ENCODE measurements at regions of chr1 and their contacts with region 1.

Region 1: DNA sequence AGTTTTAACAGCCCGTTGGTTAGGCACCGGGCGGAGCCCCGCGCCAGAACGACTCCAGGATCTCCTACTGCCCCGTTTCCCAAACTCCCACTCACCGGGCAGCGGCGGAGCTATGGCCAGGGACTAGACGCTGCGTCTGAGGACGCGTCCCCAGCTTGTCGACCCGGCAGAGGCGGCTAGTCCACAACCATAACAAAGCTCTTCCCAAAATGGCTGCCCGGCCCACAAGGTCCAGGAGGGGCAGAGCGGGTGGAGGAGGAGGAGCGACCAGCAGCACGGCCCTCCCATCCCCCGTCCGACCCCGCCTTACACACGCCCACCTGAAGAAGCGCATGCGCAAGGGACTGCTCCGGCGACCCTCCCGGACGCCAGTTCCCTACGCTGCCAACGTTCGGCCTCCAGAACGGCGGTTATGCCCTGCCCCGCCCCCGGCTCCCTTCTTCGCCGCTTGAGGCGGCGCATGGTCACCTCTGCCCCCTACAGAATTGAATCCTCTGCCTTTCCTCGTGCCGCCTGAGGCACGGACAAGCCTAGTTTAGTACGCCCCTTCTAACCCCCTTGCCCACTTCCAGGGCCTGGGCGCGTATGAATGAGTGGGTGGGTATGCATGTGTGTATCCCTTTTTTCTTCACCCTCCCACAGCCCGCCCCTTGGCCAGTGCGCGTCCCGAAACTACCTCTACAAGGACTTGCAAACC is at the start of gene GPBP1L1:
- DNase-seq: peak; percentile 95 to 99 (median 97)
- H3K4me3 ChIP-seq: peak within 1 kb of the TSS; percentile 63 to 100 (median 97)
- H3K27ac ChIP-seq: peak within 1 kb of the TSS; percentile 89 to 99 (median 98)
- H3K27me3 ChIP-seq: no peaks in the 10 kb centered on the region
- CTCF ChIP-seq: peak in 18 of 56 donors; percentile 4 to 39 (median 12)
- total RNA-seq, gene GPBP1L1: 67.0 to 120 (median 87.2) TPM

Region 2: DNA sequence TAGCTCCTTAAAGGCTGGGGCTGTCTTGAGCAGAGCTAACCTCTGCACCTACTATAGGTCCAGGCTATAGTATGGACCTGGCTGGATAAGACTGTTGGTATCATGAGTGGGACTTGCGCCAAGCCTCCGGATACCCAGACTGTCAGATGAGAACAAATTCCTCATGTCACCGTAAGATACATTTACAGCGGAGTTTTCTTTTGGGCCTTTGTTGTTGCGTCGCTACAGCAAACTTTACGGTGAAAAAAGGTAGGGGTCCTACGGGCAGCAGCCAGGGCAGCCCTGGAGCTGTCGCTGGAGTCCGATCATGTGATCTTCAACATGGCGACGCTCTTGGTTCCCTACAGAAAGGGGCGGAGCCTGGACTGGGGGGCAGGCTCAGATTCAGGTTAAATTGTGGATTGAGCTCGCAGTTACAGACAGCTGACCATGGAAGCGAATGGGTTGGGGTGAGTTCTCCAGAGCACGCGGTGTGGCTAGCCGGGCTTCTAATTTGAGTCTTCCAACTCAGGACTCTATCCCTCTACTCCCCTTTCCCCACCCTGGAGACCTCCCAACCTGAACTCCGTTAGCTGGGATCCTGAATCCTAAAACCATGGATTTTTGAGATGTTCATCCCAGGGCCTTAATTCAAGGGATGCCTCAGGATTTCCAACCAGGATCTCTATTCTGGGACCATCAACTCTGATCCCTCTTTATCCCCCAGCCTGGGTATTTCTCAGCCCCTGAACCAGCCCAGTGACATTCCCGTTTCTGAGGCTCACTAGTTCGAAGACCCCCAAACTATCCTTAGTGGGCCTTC is 674.4 kb before region 1 on chr1 and contains the start of gene UROD:
- intact Hi-C with region 1: loop called in 1 of 2 experiments (anchors 5 kb)
- DNase-seq: peak; percentile 84 to 97 (median 94)
- H3K4me3 ChIP-seq: peak within 1 kb of the TSS; percentile 64 to 100 (median 97)
- H3K27ac ChIP-seq: peak within 1 kb of the TSS; percentile 52 to 94 (median 85)
- H3K27me3 ChIP-seq: no peaks in the 10 kb centered on the region
- CTCF ChIP-seq: peak in 39 of 56 donors; percentile 3 to 62 (median 35)
- total RNA-seq, gene UROD: 53.7 to 114 (median 90.3) TPM

Region 3: DNA sequence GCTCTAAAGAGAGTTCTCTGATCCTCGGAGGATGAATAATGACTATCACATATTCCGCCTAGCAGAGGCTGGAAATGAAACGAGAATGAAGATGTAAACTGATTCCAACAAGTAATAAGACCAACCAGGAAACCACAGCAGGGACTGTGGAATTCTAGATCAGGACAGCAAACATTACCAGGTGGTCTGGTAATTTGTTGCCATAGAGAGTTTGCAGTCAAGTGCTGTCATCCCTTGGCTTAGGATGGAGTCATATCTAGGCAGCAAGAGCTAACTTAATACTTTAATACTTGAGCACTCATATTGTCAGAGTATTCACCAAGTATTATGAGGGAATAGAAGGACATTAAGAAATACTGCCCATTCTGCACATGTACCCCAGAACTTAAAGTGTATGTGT is 301.2 kb before region 1 on chr1:
- intact Hi-C with region 1: no loop called
- DNase-seq: no peak
- H3K4me3 ChIP-seq: no peak overlapping the region
- H3K27ac ChIP-seq: no peak overlapping the region
- H3K27me3 ChIP-seq: no peaks in the 10 kb centered on the region
- CTCF ChIP-seq: no peak

Region 4: DNA sequence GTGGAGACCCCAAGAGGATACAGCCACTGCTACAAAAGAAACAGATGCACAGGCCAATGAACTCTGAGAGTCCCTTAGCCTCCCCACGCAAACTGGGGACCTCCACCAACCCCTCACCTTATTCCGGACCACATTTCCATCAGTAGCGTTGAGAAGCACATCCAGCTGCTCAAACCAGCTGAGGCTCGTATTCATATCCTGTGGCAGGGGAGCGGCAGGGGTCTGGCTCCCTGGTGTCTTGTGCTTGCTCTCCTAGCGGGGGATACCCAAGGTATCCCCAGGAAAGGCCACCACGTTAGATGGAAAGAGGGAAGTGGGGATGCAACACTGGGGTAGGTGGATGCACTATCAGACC is 187.1 kb before region 1 on chr1:
- intact Hi-C with region 1: loop called in 1 of 2 experiments (anchors 2 kb)
- DNase-seq: no peak
- H3K4me3 ChIP-seq: peak overlapping the region; percentile 39 to 92 (median 79)
- H3K27ac ChIP-seq: peak overlapping the region in 55 of 59 donors; percentile 6 to 97 (median 89)
- H3K27me3 ChIP-seq: no peaks in the 10 kb centered on the region
- CTCF ChIP-seq: no peak

Region 5: DNA sequence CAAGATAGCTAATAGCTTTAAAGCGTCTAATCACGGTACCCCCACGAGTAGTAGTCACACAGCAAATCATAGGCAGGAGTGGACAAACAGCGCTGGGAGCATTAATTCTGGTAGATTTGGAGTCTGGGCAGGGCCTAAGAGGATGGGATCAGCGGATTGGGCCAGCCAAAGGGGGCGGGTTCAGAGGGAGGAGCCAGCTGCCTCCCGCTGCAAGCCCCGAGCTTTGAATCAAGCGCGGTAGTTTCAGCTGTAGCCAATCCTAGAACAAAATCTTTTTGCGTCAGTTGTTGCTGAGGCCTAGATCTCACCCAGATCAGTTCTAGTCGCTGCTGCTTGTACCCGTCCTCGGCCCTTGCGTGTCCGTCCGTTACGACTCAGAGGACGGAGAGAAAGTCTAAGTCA is 103.2 kb before region 1 on chr1:
- intact Hi-C with region 1: loop called (anchors 1 kb)
- DNase-seq: peak; percentile 84 to 97 (median 96)
- H3K4me3 ChIP-seq: peak overlapping the region; percentile 63 to 100 (median 93)
- H3K27ac ChIP-seq: peak overlapping the region in 58 of 59 donors; percentile 23 to 96 (median 84)
- H3K27me3 ChIP-seq: no peaks in the 10 kb centered on the region
- CTCF ChIP-seq: peak in 6 of 56 donors; percentile 14 to 36 (median 22)

Region 6: GRCh38 chr1:45750298-45751038 is 64.0 kb after region 1 on chr1 and contains the start of gene IPP:
- intact Hi-C with region 1: loop called (anchors 1 to 2 kb)
- DNase-seq: peak; percentile 87 to 95 (median 92)
- H3K4me3 ChIP-seq: peak within 1 kb of the TSS; percentile 60 to 94 (median 78)
- H3K27ac ChIP-seq: peak within 1 kb of the TSS; percentile 84 to 99 (median 98)
- H3K27me3 ChIP-seq: no peaks in the 10 kb centered on the region
- CTCF ChIP-seq: peak in 54 of 56 donors; percentile 18 to 77 (median 52)
- total RNA-seq, gene IPP: 9.4 to 25.7 (median 16.6) TPM

Region 7: GRCh38 chr1:45876000-45876617 is 189.6 kb after region 1 on chr1:
- intact Hi-C with region 1: loop called in 1 of 2 experiments (anchors 10 kb)
- DNase-seq: no peak
- H3K4me3 ChIP-seq: no peak overlapping the region
- H3K27ac ChIP-seq: no peak overlapping the region
- H3K27me3 ChIP-seq: no peaks in the 10 kb centered on the region
- CTCF ChIP-seq: no peak

Measured in dorsolateral prefrontal cortex (tissue), 120 donors.